ENCODE measurements at regions of chr7 and their contacts with region 1.

Region 1: DNA sequence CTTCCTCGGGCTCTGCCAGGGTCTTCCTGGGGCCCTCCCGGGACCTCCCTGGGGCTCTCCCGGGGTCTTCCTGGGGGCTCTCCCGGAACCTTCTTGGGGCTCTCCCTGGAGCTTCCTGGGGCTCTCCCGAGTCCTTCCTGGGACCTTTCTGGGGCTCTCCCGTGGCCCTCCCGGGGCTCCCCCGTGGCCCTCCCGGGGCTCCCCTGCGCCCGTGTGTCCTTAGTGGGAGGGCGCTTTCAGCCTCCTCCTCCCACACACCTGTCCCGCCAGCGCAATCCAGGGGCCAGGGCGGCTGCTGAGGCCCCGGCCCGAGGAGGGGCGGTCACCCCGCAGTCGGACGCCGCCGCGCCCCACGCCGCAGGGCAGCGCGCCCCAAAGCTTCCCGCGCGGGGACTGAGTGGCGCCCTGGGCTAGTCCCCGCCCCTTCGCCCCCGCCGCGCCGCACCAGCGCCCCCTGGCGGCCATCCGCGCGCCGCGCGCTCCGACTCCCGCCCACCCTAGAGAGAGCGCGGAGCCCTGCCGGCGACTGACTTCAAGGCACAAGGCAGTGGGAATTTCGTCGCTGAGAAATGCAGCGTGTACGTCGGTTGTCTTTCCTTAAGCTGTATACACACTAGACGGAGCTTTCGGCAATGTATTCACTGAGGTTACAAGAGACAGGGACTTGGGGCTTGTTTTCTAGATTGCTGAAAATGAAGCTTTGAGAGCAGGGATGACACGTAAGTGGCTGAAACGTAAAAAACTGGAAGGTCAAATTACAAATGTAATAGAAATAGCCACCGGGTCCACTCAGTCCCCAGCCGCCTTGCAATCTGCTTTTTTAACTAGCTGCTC is 47.1 kb downstream of the INSIG1 start:
- DNase-seq: peak; percentile 60
- H3K4me3 Mint-ChIP-seq: no peak overlapping the region
- H3K27ac Mint-ChIP-seq: no peak overlapping the region
- H3K4me1 Mint-ChIP-seq: peaks cover 4% of the 10 kb centered on the region
- H3K27me3 Mint-ChIP-seq: peaks cover 11% of the 10 kb centered on the region
- CTCF ChIP-seq: peak; percentile 92

Region 2: GRCh38 chr7:154913638-154914312 is 431.0 kb before region 1 on chr7:
- CTCF ChIA-PET with region 1: interaction called, 15 read pairs
- POLR2A ChIA-PET with region 1: no interaction called
- intact Hi-C with region 1: no loop called
- DNase-seq: peak; percentile 67
- H3K4me3 Mint-ChIP-seq: no peak overlapping the region
- H3K27ac Mint-ChIP-seq: no peak overlapping the region
- H3K4me1 Mint-ChIP-seq: no peaks in the 10 kb centered on the region
- H3K27me3 Mint-ChIP-seq: no peaks in the 10 kb centered on the region
- CTCF ChIP-seq: peak; percentile 88

Region 3: GRCh38 chr7:154927624-154928143 is 417.1 kb before region 1 on chr7:
- CTCF ChIA-PET with region 1: interaction called, 65 read pairs
- POLR2A ChIA-PET with region 1: interaction called, 12 read pairs
- intact Hi-C with region 1: loop called (anchors 1 kb)
- DNase-seq: peak; percentile 86
- H3K4me3 Mint-ChIP-seq: peak overlapping the region; percentile 97
- H3K27ac Mint-ChIP-seq: peak overlapping the region; percentile 93
- H3K4me1 Mint-ChIP-seq: peaks cover 5% of the 10 kb centered on the region
- H3K27me3 Mint-ChIP-seq: no peaks in the 10 kb centered on the region
- CTCF ChIP-seq: peak; percentile 74

Region 4: DNA sequence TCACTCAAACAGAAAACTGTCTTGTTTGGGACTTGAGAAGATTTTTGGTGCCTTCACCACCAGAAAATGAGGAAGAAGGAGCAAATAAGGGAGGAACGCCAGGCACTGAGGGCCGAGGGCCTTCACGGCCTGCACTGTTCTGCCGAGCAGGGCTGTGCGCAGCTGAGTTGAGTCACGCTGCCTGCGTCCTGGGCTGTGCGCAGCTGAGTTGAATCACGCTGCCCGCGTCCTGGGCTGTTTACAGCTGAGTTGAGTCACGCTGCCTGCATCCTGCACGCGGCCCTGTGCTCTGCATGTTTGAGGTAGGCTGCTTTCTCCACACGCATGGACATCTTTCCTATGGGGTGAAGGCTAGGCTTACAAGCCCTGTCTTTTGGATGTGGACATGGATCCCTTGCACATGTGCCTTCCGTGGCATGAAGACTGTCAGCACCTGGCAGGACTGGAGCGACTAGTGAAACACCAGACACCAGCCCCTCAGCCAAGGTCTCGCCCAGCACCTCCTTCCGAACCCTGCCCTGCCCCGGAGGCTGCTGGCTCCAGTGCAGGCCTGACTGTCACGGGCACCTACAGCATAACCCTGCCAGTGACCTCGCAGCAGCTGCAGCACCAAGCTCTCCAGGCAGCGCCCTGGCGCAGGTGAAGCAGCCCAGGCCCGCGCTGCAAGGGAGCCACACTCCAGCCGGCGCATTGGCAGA is 178.0 kb before region 1 on chr7:
- CTCF ChIA-PET with region 1: interaction called, 11 read pairs
- POLR2A ChIA-PET with region 1: no interaction called
- intact Hi-C with region 1: no loop called
- DNase-seq: peak; percentile 89
- H3K4me3 Mint-ChIP-seq: no peak overlapping the region
- H3K27ac Mint-ChIP-seq: peak overlapping the region; percentile 91
- H3K4me1 Mint-ChIP-seq: peaks cover 16% of the 10 kb centered on the region
- H3K27me3 Mint-ChIP-seq: peaks cover 6% of the 10 kb centered on the region
- CTCF ChIP-seq: no peak

Region 5: DNA sequence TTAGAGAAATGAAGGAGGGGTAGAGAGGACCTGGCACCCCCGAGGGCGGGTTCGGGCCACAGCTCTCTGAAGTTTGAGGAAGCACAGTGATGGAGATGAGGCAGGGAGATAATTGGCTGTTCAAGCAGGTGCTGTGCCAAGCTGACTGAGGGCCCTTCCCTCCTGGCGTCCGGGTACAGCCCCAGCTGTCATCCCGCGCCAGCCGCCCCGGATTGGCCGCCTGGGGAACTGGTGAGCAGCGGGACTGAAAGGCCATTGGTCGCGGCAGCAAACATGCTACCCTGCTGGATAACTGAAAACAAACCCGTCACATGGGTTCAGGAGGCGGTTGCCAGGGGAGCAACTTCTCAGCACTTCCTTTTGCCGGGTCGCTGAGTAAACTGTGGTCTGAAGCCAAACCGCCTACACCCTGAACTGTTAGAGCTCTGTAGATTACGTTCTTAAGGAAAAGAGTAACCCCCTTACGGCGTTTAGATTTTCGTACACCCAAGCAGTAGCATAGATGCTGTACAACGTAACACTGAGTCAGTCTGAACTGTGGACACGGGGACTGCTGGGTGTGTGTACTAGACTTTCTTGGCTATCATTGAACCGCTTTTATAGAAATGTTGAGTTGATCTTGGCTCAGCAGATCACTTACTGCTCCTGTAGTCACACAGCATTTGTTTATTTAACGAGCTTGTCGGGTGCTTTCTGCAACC is 45.8 kb before region 1 on chr7:
- CTCF ChIA-PET with region 1: interaction called, 12 read pairs
- POLR2A ChIA-PET with region 1: interaction called, 4 read pairs
- intact Hi-C with region 1: loop called (anchors 2 kb)
- DNase-seq: peak; percentile 97
- H3K4me3 Mint-ChIP-seq: peak overlapping the region; percentile 82
- H3K27ac Mint-ChIP-seq: peak overlapping the region; percentile 52
- H3K4me1 Mint-ChIP-seq: peaks cover 22% of the 10 kb centered on the region
- H3K27me3 Mint-ChIP-seq: no peaks in the 10 kb centered on the region
- CTCF ChIP-seq: no peak

Region 6: GRCh38 chr7:155324012-155324917 is 20.6 kb before region 1 on chr7:
- CTCF ChIA-PET with region 1: interaction called, 11 read pairs
- POLR2A ChIA-PET with region 1: no interaction called
- intact Hi-C with region 1: no loop called
- DNase-seq: no peak
- H3K4me3 Mint-ChIP-seq: no peak overlapping the region
- H3K27ac Mint-ChIP-seq: no peak overlapping the region
- H3K4me1 Mint-ChIP-seq: peaks cover 5% of the 10 kb centered on the region
- H3K27me3 Mint-ChIP-seq: no peaks in the 10 kb centered on the region
- CTCF ChIP-seq: no peak

Region 7: GRCh38 chr7:155356323-155357105 is 11.7 kb after region 1 on chr7:
- CTCF ChIA-PET with region 1: interaction called, 10 read pairs
- POLR2A ChIA-PET with region 1: no interaction called
- intact Hi-C with region 1: no loop called
- DNase-seq: peak; percentile 47
- H3K4me3 Mint-ChIP-seq: no peak overlapping the region
- H3K27ac Mint-ChIP-seq: no peak overlapping the region
- H3K4me1 Mint-ChIP-seq: peaks cover 5% of the 10 kb centered on the region
- H3K27me3 Mint-ChIP-seq: peaks cover 15% of the 10 kb centered on the region
- CTCF ChIP-seq: peak; percentile 29

Measured in MCF 10A (cell line).